Heart left ventricle (tissue), 16 donors: ENCODE measurements at regions of chr19 and their contacts with region 1.

Region 1: GRCh38 chr19:37136111-37136510 is 36.4 kb downstream of the ZNF585A start:
- DNase-seq: no peak
- ATAC-seq: no peak
- H3K4me3 ChIP-seq: no peak overlapping the region
- H3K27ac ChIP-seq: no peak overlapping the region
- H3K4me1 ChIP-seq: no peaks in the 10 kb centered on the region
- H3K27me3 ChIP-seq: no peaks in the 10 kb centered on the region
- CTCF ChIP-seq: no peak
- POLR2A ChIP-seq: no peak

Region 2: DNA sequence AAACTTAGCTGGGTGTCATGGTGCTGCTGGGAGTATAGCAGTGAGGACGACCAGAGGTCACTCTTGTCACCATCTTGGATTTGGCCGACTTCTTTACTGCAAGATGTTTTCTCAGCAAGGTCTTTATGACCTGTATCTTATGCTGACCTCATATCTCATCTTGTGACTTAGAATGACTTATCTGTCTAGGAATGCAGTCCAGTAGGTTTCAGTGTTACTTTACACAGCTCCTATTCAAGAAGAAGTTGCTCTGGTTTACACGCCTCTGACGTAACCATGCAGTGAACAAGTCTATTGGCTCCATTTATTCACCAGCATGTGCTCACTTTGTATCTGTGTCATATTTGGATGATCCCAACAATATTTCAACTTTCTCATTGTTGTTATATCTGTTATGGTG is 390.2 kb before region 1 on chr19:
- intact Hi-C with region 1: loop called in 1 of 10 experiments (anchors 10 kb)
- DNase-seq: no peak
- ATAC-seq: no peak
- H3K4me3 ChIP-seq: no peak overlapping the region
- H3K27ac ChIP-seq: no peak overlapping the region
- H3K4me1 ChIP-seq: no peaks in the 10 kb centered on the region
- H3K27me3 ChIP-seq: no peaks in the 10 kb centered on the region
- CTCF ChIP-seq: no peak
- POLR2A ChIP-seq: no peak

Region 3: GRCh38 chr19:36891768-36892357 is 244.2 kb before region 1 on chr19:
- intact Hi-C with region 1: loop called in 1 of 10 experiments (anchors 10 kb)
- DNase-seq: no peak
- ATAC-seq: no peak
- H3K4me3 ChIP-seq: no peak overlapping the region
- H3K27ac ChIP-seq: no peak overlapping the region
- H3K4me1 ChIP-seq: no peaks in the 10 kb centered on the region
- H3K27me3 ChIP-seq: no peaks in the 10 kb centered on the region
- CTCF ChIP-seq: no peak
- POLR2A ChIP-seq: no peak

Region 4: DNA sequence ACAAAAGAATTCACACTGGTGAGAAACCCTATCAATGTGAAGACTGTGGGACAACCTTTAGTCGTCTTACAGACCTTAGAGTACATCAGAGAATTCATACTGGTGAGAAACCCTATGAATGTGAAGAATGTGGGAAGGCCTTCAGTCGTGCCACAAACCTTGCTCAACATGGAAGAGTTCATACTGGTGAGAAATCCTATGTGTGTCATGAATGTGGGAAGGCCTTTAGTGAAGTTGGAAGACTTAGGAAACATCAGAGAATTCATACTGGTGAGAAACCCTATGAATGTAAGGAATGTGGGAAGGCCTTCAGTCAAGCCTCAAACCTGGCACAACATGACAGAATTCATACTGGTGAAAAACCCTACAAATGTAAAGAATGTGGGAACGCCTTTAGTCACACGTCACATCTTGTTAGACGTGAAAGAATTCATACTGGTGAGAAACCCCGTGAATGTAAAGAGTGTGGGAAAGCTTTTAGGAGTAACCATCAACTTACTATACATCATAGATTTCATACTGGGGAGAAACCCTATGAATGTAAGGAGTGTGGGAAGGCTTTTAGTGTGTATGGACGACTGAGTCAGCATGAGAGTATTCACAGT is 667.2 kb after region 1 on chr19:
- intact Hi-C with region 1: loop called in 1 of 10 experiments (anchors 10 kb)
- DNase-seq: no peak
- ATAC-seq: no peak
- H3K4me3 ChIP-seq: no peak overlapping the region
- H3K27ac ChIP-seq: no peak overlapping the region
- H3K4me1 ChIP-seq: no peaks in the 10 kb centered on the region
- H3K27me3 ChIP-seq: no peaks in the 10 kb centered on the region
- CTCF ChIP-seq: no peak
- POLR2A ChIP-seq: no peak